K562 (cell line): ENCODE measurements at regions of chr4 and their contacts with region 1.

Region 1: DNA sequence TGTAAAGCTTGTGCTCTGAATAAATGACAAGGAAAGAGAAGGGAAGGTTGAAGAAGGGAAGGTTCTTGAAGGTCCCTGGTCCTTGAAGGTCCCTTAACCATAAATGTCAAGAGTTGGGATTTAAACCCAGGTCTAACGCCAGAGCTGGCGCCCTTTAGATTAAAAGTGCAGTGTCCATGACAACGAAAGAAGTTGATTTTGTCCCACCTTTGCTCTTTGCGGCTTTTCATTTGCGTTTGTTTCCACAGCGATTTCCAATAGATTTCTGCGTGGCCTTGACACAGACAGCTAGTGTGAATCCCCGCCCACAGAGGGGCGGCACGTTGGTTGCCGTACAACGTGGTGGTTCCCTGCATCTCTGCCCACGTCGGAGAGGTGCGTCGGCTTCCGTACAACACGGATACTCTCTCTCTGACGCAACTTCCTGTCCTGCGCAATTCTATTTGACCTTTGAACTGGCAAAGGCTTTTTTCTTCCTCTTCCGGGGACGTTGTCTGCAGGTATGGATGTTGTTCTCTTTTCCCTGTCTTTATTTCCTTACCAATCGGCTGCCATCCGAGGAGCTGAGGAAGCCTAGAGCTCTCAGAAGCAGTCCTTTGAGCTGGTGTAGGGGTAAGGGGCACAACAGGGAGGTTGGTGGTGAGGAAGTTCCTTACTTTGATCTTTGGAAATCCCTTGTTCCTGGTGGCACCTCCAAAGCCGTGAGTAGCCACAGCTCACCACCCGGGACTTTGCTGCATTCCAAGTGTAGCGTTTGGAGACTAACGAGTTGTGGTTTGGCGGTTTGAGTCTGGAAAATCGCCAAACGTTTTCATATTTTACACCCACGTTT is at the start of gene RPL34:
- DNase-seq: peak; percentile 87 to 99 (median 90)
- ATAC-seq: peak; percentile 98
- H3K4me3 ChIP-seq: peak within 1 kb of the TSS; percentile 82
- H3K27ac ChIP-seq: peak within 1 kb of the TSS; percentile 93
- H3K4me1 ChIP-seq: peaks cover 13 to 28% of the 10 kb centered on the region in 2 experiments; a peak in 4 of 5 replicates
- H3K27me3 ChIP-seq: no peaks in the 10 kb centered on the region
- CTCF ChIP-seq: no peak
- EP300 ChIP-seq: no peak
- POLR2A ChIP-seq: peak; percentile 99
- RAD21 ChIP-seq: no peak
- polyA plus RNA-seq, gene RPL34: 3,162 to 4,454 TPM

Region 2: DNA sequence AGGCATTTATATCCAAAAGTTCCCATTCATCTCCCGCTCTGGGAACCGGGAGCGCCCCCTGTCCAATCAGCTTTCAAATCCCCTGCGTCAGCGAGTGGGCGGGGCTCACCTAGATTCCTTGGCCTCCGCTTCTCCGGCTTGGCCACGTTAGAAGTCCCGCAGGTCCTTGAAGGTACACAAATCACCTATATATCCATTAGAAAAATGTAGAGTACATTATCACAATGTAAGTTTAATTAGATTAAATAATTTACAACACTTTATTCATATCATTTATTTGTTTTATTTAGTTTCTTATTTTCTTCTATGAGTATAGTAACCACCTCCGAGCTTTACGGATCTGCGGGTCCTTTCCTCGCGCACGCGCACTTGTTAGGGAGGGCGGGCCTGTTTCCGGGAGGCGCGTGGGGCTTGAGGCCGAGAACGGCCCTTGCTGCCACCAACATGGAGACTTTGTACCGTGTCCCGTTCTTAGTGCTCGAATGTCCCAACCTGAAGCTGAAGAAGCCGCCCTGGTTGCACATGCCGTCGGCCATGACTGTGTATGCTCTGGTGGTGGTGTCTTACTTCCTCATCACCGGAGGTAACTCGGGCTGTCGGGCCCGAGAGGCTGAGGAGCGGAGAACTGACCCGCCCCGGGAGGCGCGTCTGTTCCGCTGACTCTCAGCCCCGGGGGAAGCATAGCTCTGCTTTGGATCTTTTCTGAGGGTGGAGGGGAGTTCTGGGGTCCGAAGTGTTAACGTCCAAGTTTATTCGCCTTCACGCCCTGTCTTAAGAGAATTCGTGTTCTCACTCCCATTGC is 30.1 kb after region 1 on chr4 and contains the start of gene OSTC:
- CTCF ChIA-PET with region 1: no interaction called
- POLR2A ChIA-PET with region 1: interaction called, 10 read pairs
- in situ Hi-C with region 1: no loop called
- intact Hi-C with region 1: no loop called
- DNase-seq: peak; percentile 87 to 97 (median 92)
- ATAC-seq: peak; percentile 89
- H3K4me3 ChIP-seq: peak within 1 kb of the TSS; percentile 50
- H3K27ac ChIP-seq: peak within 1 kb of the TSS; percentile 81
- H3K4me1 ChIP-seq: peaks cover 0 to 3% of the 10 kb centered on the region in 2 experiments; a peak in 2 of 5 replicates
- H3K27me3 ChIP-seq: no peaks in the 10 kb centered on the region
- CTCF ChIP-seq: peak in 2 of 3 experiments; percentile 25 to 33; a peak in 1 of 6 replicates
- EP300 ChIP-seq: no peak
- POLR2A ChIP-seq: peak; percentile 95
- RAD21 ChIP-seq: no peak
- polyA plus RNA-seq, gene OSTC: 851 to 966 TPM

Region 3: DNA sequence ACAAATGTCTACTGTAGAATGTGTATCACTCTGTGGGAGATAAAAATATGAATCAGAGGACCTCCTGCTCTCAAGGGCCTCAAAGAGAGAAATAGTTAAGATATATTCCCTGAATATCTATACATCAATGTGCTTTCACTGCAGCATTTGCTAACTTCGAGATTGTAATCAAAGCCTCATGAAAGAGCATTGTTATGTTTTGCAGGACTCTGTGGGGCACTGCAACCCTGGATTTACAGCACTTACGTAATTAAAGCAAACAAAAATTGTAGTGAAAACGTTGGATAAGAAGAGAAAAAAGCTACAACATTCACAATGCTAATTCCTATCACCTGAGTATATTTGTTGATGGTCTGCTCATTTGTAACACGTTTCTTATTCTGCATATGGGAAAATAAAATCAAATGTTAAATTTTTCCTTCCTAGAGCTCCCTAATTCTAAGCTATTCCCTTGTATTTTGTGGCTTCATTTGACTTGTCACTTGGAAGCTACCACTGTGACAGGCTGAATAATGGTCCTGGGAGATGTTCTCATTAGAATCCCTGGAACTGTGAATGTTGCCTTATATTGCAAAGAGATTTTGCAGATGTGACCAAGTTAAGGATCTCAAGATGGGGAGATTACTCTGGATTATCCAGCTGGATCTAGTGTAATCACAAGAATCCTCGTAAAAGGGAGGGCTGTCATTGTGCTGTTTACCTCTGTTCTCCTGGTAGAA is 94.7 kb after region 1 on chr4:
- CTCF ChIA-PET with region 1: no interaction called
- POLR2A ChIA-PET with region 1: no interaction called
- in situ Hi-C with region 1: no loop called
- intact Hi-C with region 1: no loop called
- DNase-seq: no peak
- ATAC-seq: no peak
- H3K4me3 ChIP-seq: no peak overlapping the region
- H3K27ac ChIP-seq: no peak overlapping the region
- H3K4me1 ChIP-seq: no peaks in the 10 kb centered on the region; a peak in 1 of 5 replicates
- H3K27me3 ChIP-seq: peaks cover 7 to 8% of the 10 kb centered on the region in 2 experiments; a peak in 3 of 5 replicates
- CTCF ChIP-seq: no peak
- EP300 ChIP-seq: no peak
- POLR2A ChIP-seq: no peak
- RAD21 ChIP-seq: no peak